ENCODE measurements at regions of chr15 and their contacts with region 1.

Region 1: GRCh38 chr15:81111510-81112470 is 22.3 kb upstream of the CFAP161 start:
- DNase-seq: peak; percentile 22
- ATAC-seq: no peak
- H3K4me3 ChIP-seq: no peak overlapping the region
- H3K4me3 Mint-ChIP-seq: no peak overlapping the region
- H3K27ac ChIP-seq: no peak overlapping the region
- H3K27ac Mint-ChIP-seq: no peak overlapping the region
- H3K4me1 ChIP-seq: no peaks in the 10 kb centered on the region
- H3K4me1 Mint-ChIP-seq: peaks cover 5% of the 10 kb centered on the region
- H3K27me3 ChIP-seq: peaks cover 0 to 8% (median 3%) of the 10 kb centered on the region in 4 experiments
- H3K27me3 Mint-ChIP-seq: peaks cover 32% of the 10 kb centered on the region
- CTCF ChIP-seq: no peak

Region 2: GRCh38 chr15:81168132-81168526 is 56.3 kb after region 1 on chr15:
- CTCF ChIA-PET with region 1: no interaction called
- POLR2A ChIA-PET with region 1: interaction called, 19 read pairs
- intact Hi-C with region 1: no loop called
- DNase-seq: no peak
- ATAC-seq: no peak
- H3K4me3 ChIP-seq: no peak overlapping the region
- H3K4me3 Mint-ChIP-seq: no peak overlapping the region
- H3K27ac ChIP-seq: no peak overlapping the region
- H3K27ac Mint-ChIP-seq: no peak overlapping the region
- H3K4me1 ChIP-seq: no peaks in the 10 kb centered on the region
- H3K4me1 Mint-ChIP-seq: no peaks in the 10 kb centered on the region
- H3K27me3 ChIP-seq: peaks cover 0 to 13% (median 0%) of the 10 kb centered on the region in 4 experiments
- H3K27me3 Mint-ChIP-seq: peaks cover 24% of the 10 kb centered on the region
- CTCF ChIP-seq: no peak

Measured in B cell (primary cell).